ENCODE measurements at regions of chr12 and their contacts with region 1.

Region 1: DNA sequence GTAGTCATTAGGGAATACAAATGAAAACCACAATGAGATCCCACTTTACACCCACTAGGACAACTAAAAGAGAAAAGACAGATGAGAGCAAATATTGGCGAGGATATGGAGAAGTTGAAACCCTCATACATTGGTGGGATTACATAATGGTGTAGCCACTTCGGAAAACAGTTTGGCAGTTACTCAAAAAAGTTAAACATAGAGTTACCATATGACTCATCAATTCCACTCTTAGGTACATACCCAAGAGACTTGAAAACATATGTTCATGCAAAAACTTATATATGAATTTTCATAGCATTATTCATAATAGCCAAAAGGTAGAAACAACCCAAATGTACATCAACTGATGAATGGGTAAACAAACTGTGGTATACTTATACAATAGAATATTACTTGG is 27.1 kb downstream of the ALDH1L2 start:
- DNase-seq: no peak
- H3K4me3 ChIP-seq: no peak overlapping the region
- H3K27ac ChIP-seq: no peak overlapping the region
- H3K4me1 ChIP-seq: no peaks in the 10 kb centered on the region
- H3K27me3 ChIP-seq: no peaks in the 10 kb centered on the region
- CTCF ChIP-seq: no peak
- POLR2A ChIP-seq: no peak

Region 2: DNA sequence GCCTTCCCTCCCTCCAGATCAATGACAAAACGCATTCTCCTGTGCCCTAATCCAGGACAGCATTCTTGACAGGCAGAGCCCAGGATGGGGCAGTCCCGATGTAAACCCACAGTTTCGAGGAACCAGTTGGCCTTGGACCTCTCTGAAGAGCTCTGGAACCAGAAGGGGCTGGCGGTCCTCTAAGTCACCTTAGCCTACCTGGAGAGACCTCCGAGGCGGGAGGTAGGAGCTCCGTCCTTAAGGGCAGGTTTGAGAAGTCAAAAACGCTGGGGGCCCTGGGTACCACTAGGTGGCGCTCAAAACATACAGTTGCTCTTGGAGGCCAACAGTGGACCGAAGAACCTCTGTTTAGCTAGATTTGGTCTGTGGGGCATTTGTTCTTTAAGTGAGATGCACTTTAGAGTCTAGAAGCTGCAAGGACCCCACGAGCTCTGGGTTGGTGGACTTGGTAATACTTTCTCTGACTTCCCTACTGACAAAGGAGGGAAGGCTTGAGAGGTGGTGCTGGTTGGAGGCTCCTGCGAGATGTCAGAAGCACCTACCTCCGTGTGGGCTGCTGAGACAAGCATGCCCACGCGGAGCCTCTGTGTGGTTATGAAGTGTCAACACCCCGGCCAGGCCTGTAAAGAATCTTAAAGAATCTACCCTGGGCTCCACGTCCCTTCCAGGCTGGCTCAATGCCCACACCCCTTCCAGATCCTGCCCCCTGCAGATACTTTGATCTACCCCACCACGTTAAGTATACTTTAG is 675.3 kb before region 1 on chr12:
- intact Hi-C with region 1: loop called (anchors 5 kb)
- DNase-seq: peak; percentile 78 to 82
- H3K4me3 ChIP-seq: no peak overlapping the region
- H3K27ac ChIP-seq: no peak overlapping the region
- H3K4me1 ChIP-seq: peaks cover 0 to 8% of the 10 kb centered on the region in 2 donors
- H3K27me3 ChIP-seq: no peaks in the 10 kb centered on the region
- CTCF ChIP-seq: peak; percentile 82 to 94 (median 88)
- POLR2A ChIP-seq: no peak

Region 3: GRCh38 chr12:105013892-105014291 is 43.3 kb before region 1 on chr12:
- intact Hi-C with region 1: no loop called
- DNase-seq: no peak
- H3K4me3 ChIP-seq: no peak overlapping the region
- H3K27ac ChIP-seq: no peak overlapping the region
- H3K4me1 ChIP-seq: peaks cover 4 to 6% of the 10 kb centered on the region in 2 donors
- H3K27me3 ChIP-seq: no peaks in the 10 kb centered on the region
- CTCF ChIP-seq: no peak
- POLR2A ChIP-seq: no peak

Region 4: GRCh38 chr12:105590541-105590940 is 533.4 kb after region 1 on chr12:
- intact Hi-C with region 1: no loop called
- DNase-seq: no peak
- H3K4me3 ChIP-seq: no peak overlapping the region
- H3K27ac ChIP-seq: no peak overlapping the region
- H3K4me1 ChIP-seq: peaks cover 0 to 4% of the 10 kb centered on the region in 2 donors
- H3K27me3 ChIP-seq: no peaks in the 10 kb centered on the region
- CTCF ChIP-seq: no peak
- POLR2A ChIP-seq: no peak